B cell (primary cell): ENCODE measurements at regions of chr2 and their contacts with region 1.

Region 1: DNA sequence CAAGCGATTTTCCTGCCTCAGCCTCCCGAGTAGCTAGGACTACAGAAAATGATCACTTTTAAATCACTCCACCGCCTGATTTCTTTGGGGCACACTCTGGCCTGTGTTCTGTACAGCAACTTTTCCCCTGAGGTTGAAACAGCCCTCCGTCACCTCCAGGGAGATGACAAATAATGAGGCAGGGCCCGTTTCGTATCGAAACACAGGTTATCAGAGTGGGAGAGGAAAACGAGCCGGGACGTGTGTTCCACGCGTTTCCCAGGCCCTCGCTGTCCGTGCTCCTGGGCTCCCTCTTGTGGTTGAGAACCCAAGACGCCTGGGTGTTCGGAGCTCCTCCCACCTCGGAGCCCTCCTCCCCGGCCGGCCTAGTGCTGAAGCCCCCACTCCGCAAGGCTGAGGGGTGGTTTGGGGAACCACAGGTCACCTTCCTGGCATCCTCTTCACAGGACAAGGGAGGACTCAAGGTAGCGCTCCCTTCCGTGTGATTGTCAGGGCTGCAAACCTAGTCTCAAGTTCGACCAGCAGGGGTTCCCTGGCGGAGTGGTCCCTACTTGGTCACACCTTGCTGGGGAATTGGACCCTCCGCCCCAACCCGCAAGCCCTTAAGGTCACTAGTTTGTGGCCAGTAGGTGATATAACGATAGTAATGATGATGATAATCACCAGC is 12.8 kb downstream of the ATP6V1B1 start:
- DNase-seq: peak; percentile 83
- ATAC-seq: peak; percentile 99
- H3K4me3 ChIP-seq: peak overlapping the region in 3 of 5 experiments; percentile 30 to 41 (median 39)
- H3K4me3 Mint-ChIP-seq: peak overlapping the region; percentile 86
- H3K27ac ChIP-seq: no peak overlapping the region
- H3K27ac Mint-ChIP-seq: no peak overlapping the region
- H3K4me1 ChIP-seq: peaks cover 13 to 14% of the 10 kb centered on the region in 2 donors
- H3K4me1 Mint-ChIP-seq: peaks cover 11% of the 10 kb centered on the region
- H3K27me3 ChIP-seq: peaks cover 0 to 20% (median 11%) of the 10 kb centered on the region in 4 experiments
- H3K27me3 Mint-ChIP-seq: peaks cover 25% of the 10 kb centered on the region
- CTCF ChIP-seq: peak; percentile 84

Region 2: GRCh38 chr2:70656421-70657010 is 292.0 kb before region 1 on chr2:
- CTCF ChIA-PET with region 1: interaction called, 4 read pairs
- POLR2A ChIA-PET with region 1: no interaction called
- intact Hi-C with region 1: loop called (anchors 5 kb)
- DNase-seq: no peak
- ATAC-seq: no peak
- H3K4me3 ChIP-seq: no peak overlapping the region
- H3K4me3 Mint-ChIP-seq: no peak overlapping the region
- H3K27ac ChIP-seq: no peak overlapping the region
- H3K27ac Mint-ChIP-seq: no peak overlapping the region
- H3K4me1 ChIP-seq: no peaks in the 10 kb centered on the region
- H3K4me1 Mint-ChIP-seq: peaks cover 2% of the 10 kb centered on the region
- H3K27me3 ChIP-seq: peaks cover 0 to 10% (median 6%) of the 10 kb centered on the region in 4 experiments
- H3K27me3 Mint-ChIP-seq: peaks cover 27% of the 10 kb centered on the region
- CTCF ChIP-seq: no peak

Region 3: DNA sequence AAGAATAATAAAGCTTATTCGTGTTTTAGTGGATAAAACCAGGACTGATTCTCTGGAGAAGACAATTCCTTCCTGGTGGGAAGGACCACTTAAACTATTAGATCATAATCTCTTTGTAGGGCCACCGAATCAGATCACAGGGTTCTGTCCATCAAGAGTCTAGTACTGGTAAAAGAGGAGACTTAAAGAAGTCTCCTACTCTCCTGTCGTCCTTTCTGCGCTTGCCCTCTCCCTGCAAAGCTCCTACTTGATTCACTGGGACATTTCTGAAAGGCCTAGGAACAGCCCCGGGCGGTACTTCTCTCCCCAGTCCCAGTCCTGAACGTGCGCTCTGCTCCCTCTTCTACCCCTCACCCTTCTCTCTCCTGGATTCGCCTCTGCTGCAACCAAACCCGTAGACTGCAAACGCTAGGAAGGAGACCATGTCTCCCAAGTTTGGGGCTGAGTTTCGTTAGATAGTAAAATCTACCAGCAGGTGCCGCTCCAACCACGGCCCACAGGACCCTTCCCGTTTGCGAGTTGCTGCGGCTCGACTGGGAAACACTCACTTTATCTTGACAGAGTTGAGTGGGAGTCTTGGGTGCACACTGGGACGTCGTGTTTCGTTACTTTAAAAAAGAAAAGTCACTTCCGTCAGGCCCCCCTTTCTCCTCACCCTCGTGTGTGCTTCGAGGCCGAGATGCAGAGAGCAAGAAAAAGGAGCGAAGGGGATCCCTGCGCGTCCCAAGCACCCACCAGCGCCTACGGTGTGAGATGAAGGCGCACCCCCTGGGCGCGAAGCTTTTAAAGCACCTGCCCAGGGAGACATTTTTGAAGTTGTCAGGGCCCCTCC is 158.9 kb before region 1 on chr2:
- CTCF ChIA-PET with region 1: interaction called, 18 read pairs
- POLR2A ChIA-PET with region 1: no interaction called
- intact Hi-C with region 1: loop called (anchors 1 kb)
- DNase-seq: peak; percentile 73
- ATAC-seq: peak; percentile 68
- H3K4me3 ChIP-seq: peak overlapping the region in 3 of 5 experiments; percentile 23 to 49 (median 42)
- H3K4me3 Mint-ChIP-seq: peak overlapping the region; percentile 84
- H3K27ac ChIP-seq: no peak overlapping the region
- H3K27ac Mint-ChIP-seq: no peak overlapping the region
- H3K4me1 ChIP-seq: peaks cover 11 to 15% of the 10 kb centered on the region in 2 donors
- H3K4me1 Mint-ChIP-seq: peaks cover 7% of the 10 kb centered on the region
- H3K27me3 ChIP-seq: peaks cover 0 to 46% (median 27%) of the 10 kb centered on the region in 4 experiments
- H3K27me3 Mint-ChIP-seq: peaks cover 61% of the 10 kb centered on the region
- CTCF ChIP-seq: peak; percentile 63

Region 4: GRCh38 chr2:70861777-70862625 is 86.5 kb before region 1 on chr2:
- CTCF ChIA-PET with region 1: interaction called, 5 read pairs
- POLR2A ChIA-PET with region 1: no interaction called
- intact Hi-C with region 1: loop called (anchors 1 kb)
- DNase-seq: peak; percentile 68
- ATAC-seq: peak; percentile 58
- H3K4me3 ChIP-seq: no peak overlapping the region
- H3K4me3 Mint-ChIP-seq: no peak overlapping the region
- H3K27ac ChIP-seq: no peak overlapping the region
- H3K27ac Mint-ChIP-seq: no peak overlapping the region
- H3K4me1 ChIP-seq: no peaks in the 10 kb centered on the region
- H3K4me1 Mint-ChIP-seq: peaks cover 2% of the 10 kb centered on the region
- H3K27me3 ChIP-seq: peaks cover 0 to 23% (median 15%) of the 10 kb centered on the region in 4 experiments
- H3K27me3 Mint-ChIP-seq: peaks cover 61% of the 10 kb centered on the region
- CTCF ChIP-seq: peak; percentile 95

Region 5: GRCh38 chr2:70907130-70908057 is 41.1 kb before region 1 on chr2:
- CTCF ChIA-PET with region 1: no interaction called
- POLR2A ChIA-PET with region 1: no interaction called
- intact Hi-C with region 1: no loop called
- DNase-seq: peak; percentile 32
- ATAC-seq: no peak
- H3K4me3 ChIP-seq: peak overlapping the region in 3 of 5 experiments; percentile 11 to 58 (median 25)
- H3K4me3 Mint-ChIP-seq: peak overlapping the region; percentile 51
- H3K27ac ChIP-seq: no peak overlapping the region
- H3K27ac Mint-ChIP-seq: no peak overlapping the region
- H3K4me1 ChIP-seq: peaks cover 16 to 19% of the 10 kb centered on the region in 2 donors
- H3K4me1 Mint-ChIP-seq: peaks cover 13% of the 10 kb centered on the region
- H3K27me3 ChIP-seq: peaks cover 0 to 66% (median 57%) of the 10 kb centered on the region in 4 experiments
- H3K27me3 Mint-ChIP-seq: peaks cover 63% of the 10 kb centered on the region
- CTCF ChIP-seq: no peak

Region 6: GRCh38 chr2:70927641-70928040 is 20.8 kb before region 1 on chr2:
- CTCF ChIA-PET with region 1: no interaction called
- POLR2A ChIA-PET with region 1: no interaction called
- intact Hi-C with region 1: no loop called
- DNase-seq: no peak
- ATAC-seq: no peak
- H3K4me3 ChIP-seq: no peak overlapping the region
- H3K4me3 Mint-ChIP-seq: no peak overlapping the region
- H3K27ac ChIP-seq: no peak overlapping the region
- H3K27ac Mint-ChIP-seq: no peak overlapping the region
- H3K4me1 ChIP-seq: peaks cover 9 to 12% of the 10 kb centered on the region in 2 donors
- H3K4me1 Mint-ChIP-seq: peaks cover 7% of the 10 kb centered on the region
- H3K27me3 ChIP-seq: peaks cover 0 to 15% (median 1%) of the 10 kb centered on the region in 4 experiments
- H3K27me3 Mint-ChIP-seq: peaks cover 37% of the 10 kb centered on the region
- CTCF ChIP-seq: no peak